PC-3 (cell line): ENCODE measurements at regions of chr12 and their contacts with region 1.

Region 1: DNA sequence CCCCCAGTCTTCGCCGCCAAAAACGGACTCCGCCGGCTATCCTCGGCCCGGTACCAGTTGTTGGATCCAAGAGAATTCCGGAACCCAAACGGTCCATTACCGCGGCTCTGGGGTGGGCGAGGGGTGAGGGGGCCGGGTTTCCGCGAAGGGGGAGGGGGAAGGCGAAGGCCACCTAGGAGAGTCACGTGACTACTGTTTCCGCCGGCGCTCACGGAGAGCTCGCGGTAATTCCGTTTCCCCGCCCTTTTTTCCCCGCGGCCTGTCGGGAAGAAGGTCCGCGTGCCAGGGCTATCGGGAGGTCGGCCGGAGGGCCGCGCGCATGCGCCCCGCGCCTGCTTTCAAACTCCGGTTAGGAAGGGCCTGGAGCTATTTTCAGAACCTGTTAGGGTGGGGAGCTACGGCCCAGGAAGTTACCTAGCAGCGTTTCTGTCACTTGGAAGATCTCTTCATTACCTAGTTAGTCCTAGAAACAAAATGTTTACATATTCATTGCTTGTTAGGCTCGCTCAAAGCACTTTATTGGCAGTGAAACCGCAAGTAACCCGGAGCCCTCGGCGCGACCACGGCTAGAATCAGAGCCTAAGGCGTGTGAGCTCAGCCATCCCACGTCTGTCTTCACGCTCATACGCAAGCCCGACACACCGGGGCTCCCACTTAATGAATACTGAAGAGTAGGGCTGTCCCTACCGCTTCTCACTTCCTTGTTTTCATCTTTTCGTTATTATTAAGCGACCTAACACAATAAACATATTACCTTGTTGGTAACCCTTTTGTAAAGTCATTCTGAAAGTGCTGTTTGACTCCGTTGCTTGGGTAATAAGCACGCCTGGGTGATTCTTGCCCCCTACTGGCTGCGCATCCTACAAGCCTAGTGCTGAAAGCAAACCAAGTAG is 624 bp upstream of the SBNO1 start:
- DNase-seq: peak; percentile 99
- ATAC-seq: peak; percentile 77
- H3K4me3 ChIP-seq: peak overlapping the region; percentile 78
- H3K27ac ChIP-seq: peak overlapping the region; percentile 83
- H3K4me1 ChIP-seq: peaks cover 8% of the 10 kb centered on the region
- H3K27me3 ChIP-seq: no peaks in the 10 kb centered on the region
- CTCF ChIP-seq: peak; percentile 89

Region 2: GRCh38 chr12:123337070-123337469 is 28.2 kb before region 1 on chr12:
- CTCF ChIA-PET with region 1: no interaction called
- POLR2A ChIA-PET with region 1: no interaction called
- intact Hi-C with region 1: no loop called
- DNase-seq: no peak
- ATAC-seq: no peak
- H3K4me3 ChIP-seq: no peak overlapping the region
- H3K27ac ChIP-seq: no peak overlapping the region
- H3K4me1 ChIP-seq: no peaks in the 10 kb centered on the region
- H3K27me3 ChIP-seq: no peaks in the 10 kb centered on the region
- CTCF ChIP-seq: no peak

Region 3: DNA sequence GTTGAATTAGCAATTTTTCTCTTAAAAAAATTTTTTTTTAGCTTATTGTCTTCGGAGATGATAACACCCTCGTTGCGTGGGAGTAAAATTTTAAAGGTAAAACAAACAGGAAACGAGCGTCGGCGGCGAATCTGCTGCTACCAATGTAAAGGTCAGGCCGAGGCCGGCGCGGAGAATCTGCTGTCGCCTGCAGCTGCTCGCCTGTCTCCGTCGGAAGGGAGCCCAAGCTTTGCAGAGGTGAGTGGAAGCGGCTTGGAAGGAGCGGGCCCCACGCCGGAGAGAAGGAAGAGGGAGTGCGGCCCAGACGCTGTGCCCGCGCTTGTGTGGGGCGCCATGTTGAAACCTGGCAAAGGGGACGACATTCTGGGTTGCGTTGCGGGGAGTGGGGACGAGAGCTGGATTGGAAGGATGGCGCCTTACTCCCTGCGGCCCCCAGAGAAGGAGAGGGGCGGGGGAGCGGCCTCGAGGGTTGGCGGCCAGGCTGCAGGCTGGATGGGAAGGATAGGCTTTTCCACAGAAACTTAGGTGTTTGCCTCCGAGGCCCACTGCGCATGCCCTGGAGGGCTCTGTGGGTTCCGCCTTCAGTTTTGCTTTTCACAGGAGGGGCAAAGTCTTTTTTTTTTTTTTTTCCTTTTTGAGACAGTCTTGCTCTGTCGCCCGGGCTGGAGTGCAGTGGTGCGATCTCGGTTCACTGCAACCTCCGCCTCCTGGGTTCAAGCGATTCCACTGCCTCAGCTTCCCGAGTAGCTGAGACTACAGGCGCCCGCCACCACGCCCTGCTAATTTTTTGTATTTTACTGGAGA is 92.9 kb after region 1 on chr12 and contains the start of gene SNRNP35:
- CTCF ChIA-PET with region 1: no interaction called
- POLR2A ChIA-PET with region 1: no interaction called
- intact Hi-C with region 1: loop called (anchors 1 kb)
- DNase-seq: peak; percentile 70
- ATAC-seq: peak; percentile 79
- H3K4me3 ChIP-seq: peak within 1 kb of the TSS; percentile 76
- H3K27ac ChIP-seq: peak within 1 kb of the TSS; percentile 91
- H3K4me1 ChIP-seq: no peaks in the 10 kb centered on the region; the same call in 1 of the 2 replicates
- H3K27me3 ChIP-seq: no peaks in the 10 kb centered on the region
- CTCF ChIP-seq: no peak
- total RNA-seq, gene SNRNP35: 15.9 and 22.9 TPM in 2 replicates